ENCODE measurements at regions of chr19 and their contacts with region 1.

Region 1: GRCh38 chr19:13366529-13367143 is 139.6 kb downstream of the CACNA1A start:
- DNase-seq: peak; percentile 31
- ATAC-seq: no peak
- H3K4me3 ChIP-seq: no peak overlapping the region
- H3K27ac ChIP-seq: no peak overlapping the region
- H3K4me1 ChIP-seq: no peaks in the 10 kb centered on the region
- H3K27me3 ChIP-seq: no peaks in the 10 kb centered on the region; the same call in 1 of the 2 replicates
- CTCF ChIP-seq: peak; percentile 61
- POLR2A ChIP-seq: no peak
- RAD21 ChIP-seq: peak; percentile 60

Region 2: GRCh38 chr19:13255041-13255718 is 111.5 kb before region 1 on chr19:
- CTCF ChIA-PET with region 1: no interaction called
- POLR2A ChIA-PET with region 1: no interaction called
- dilution Hi-C with region 1: no loop called
- in situ Hi-C with region 1: no loop called
- intact Hi-C with region 1: no loop called
- DNase-seq: no peak
- ATAC-seq: no peak
- H3K4me3 ChIP-seq: no peak overlapping the region
- H3K27ac ChIP-seq: no peak overlapping the region
- H3K4me1 ChIP-seq: no peaks in the 10 kb centered on the region
- H3K27me3 ChIP-seq: no peaks in the 10 kb centered on the region
- CTCF ChIP-seq: no peak
- POLR2A ChIP-seq: no peak
- RAD21 ChIP-seq: no peak

Region 3: DNA sequence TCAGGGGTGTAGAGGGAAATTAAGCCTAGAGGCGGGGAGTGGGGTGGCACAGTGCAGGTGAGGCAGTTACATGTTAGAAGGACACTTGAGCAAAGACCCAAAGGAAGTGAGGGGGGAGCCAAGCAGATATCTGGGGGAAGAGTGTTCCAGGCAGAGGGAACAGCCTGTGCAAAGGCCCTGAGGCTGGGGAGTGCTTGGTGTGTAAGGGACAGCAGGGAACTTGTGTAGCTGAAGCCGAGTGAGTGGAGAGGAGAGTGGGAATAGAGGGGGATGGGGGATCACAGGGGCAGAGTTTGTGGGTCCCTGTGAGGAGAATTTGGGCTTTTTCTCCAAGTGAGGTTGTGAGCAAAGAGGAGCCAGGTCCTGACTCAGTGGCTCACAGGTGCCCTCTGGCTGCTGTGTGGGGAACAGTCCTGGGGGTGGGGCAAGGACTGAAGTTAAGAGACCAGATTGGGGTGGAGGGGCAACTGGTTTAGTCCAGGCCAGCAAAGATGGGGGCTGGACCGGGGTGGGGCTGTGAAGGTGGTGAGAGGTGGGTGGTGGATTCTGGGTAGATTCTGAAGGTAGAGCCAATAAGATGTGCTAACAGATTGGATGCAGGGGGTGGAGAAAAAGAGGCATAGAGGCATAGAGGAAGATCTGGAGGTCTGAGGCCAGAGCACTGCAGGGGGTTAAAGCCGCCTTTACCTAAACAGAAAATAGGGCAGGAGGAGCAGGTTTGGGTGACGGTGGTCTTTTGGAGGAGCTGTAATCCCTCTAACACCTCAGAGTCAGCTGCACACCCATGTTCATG is 64.3 kb after region 1 on chr19:
- CTCF ChIA-PET with region 1: no interaction called
- POLR2A ChIA-PET with region 1: no interaction called
- dilution Hi-C with region 1: no loop called
- in situ Hi-C with region 1: no loop called
- intact Hi-C with region 1: loop called (anchors 1 kb)
- DNase-seq: peak; percentile 42
- ATAC-seq: peak; percentile 91
- H3K4me3 ChIP-seq: no peak overlapping the region
- H3K27ac ChIP-seq: no peak overlapping the region
- H3K4me1 ChIP-seq: no peaks in the 10 kb centered on the region
- H3K27me3 ChIP-seq: no peaks in the 10 kb centered on the region
- CTCF ChIP-seq: peak; percentile 78
- POLR2A ChIP-seq: no peak
- RAD21 ChIP-seq: peak; percentile 80

Region 4: DNA sequence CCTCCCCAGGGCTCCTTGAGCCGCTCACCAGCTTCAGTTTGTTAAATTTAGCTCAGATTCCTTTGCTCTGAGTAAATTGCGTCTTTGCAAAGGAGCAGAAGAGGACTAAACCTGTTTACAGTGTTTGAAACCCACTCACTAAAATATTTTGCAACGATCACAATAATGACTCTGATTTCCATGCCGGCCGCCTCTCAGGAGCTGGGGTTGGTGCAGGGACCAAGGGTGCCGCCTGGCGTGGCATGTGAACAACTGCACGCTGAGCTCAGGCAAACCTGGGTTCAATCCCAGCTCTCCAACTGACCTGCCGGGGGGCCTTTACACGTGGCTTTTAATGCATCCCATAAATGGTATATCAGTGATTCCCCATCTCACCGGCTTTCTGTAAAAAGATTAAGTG is 208.3 kb after region 1 on chr19:
- CTCF ChIA-PET with region 1: no interaction called
- POLR2A ChIA-PET with region 1: no interaction called
- dilution Hi-C with region 1: no loop called
- in situ Hi-C with region 1: no loop called
- intact Hi-C with region 1: loop called (anchors 1 kb)
- DNase-seq: peak; percentile 39
- ATAC-seq: peak; percentile 61
- H3K4me3 ChIP-seq: no peak overlapping the region
- H3K27ac ChIP-seq: no peak overlapping the region
- H3K4me1 ChIP-seq: no peaks in the 10 kb centered on the region
- H3K27me3 ChIP-seq: no peaks in the 10 kb centered on the region
- CTCF ChIP-seq: peak; percentile 40
- POLR2A ChIP-seq: no peak
- RAD21 ChIP-seq: peak; percentile 53

Region 5: GRCh38 chr19:13588957-13589833 is 222.6 kb after region 1 on chr19:
- CTCF ChIA-PET with region 1: no interaction called
- POLR2A ChIA-PET with region 1: no interaction called
- dilution Hi-C with region 1: no loop called
- in situ Hi-C with region 1: no loop called
- intact Hi-C with region 1: loop called (anchors 5 kb)
- DNase-seq: peak; percentile 41
- ATAC-seq: peak; percentile 100
- H3K4me3 ChIP-seq: no peak overlapping the region
- H3K27ac ChIP-seq: no peak overlapping the region
- H3K4me1 ChIP-seq: no peaks in the 10 kb centered on the region
- H3K27me3 ChIP-seq: peaks cover 5% of the 10 kb centered on the region
- CTCF ChIP-seq: peak; percentile 94
- POLR2A ChIP-seq: no peak
- RAD21 ChIP-seq: peak; percentile 88

Measured in IMR-90 (cell line).